ENCODE measurements at regions of chr1 and their contacts with region 1.

Region 1: DNA sequence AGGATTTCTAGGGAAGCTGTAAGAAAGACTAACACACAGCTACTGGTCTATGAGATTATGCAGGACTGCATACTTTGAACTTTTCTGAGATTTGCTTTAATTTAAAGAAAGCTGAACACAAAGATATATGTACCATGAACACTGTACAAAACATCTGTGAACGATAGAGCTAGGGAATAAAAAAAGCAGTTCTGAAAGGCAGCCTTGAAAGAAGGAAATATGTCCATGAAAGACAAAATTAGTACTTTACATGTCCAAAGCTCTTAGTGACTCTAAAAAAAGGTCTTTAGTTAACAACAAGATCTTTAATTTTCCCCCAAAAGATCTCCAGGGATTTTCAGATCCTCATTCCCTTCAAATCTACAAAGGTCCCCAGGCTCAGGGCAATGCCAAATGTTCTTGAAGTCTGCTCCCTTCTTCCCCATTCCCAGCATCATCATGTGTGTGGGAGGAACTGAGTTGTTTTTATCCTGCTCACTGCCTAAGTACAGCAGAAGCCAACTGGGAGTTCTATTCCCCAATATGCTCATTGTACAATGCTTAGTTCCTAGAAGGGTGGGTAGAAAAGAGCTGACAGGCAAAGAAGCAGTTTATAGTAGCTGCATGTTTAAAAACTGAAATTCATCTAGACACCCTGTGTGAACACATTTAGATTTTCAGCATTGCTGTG is 60.1 kb upstream of the PTCH2 start:
- DNase-seq: peak in 4 of 5 donors; percentile 44 to 66 (median 61)
- ATAC-seq: peak; percentile 59 to 92 (median 83)
- H3K4me3 ChIP-seq: peak overlapping the region in 3 of 12 donors; percentile 8 to 27 (median 22)
- H3K27ac ChIP-seq: peak overlapping the region in 7 of 12 donors; percentile 1 to 55 (median 44)
- H3K4me1 ChIP-seq: peaks cover 0 to 19% (median 0%) of the 10 kb centered on the region in 12 donors
- H3K27me3 ChIP-seq: no peaks in the 10 kb centered on the region
- CTCF ChIP-seq: no peak
- POLR2A ChIP-seq: no peak

Region 2: GRCh38 chr1:44848456-44849181 is 54.5 kb before region 1 on chr1:
- intact Hi-C with region 1: loop called in 1 of 10 experiments (anchors 5 kb)
- DNase-seq: peak in 2 of 5 donors; percentile 24 to 40
- ATAC-seq: peak in 2 of 4 donors; percentile 35 to 48
- H3K4me3 ChIP-seq: no peak overlapping the region
- H3K27ac ChIP-seq: peak overlapping the region in 5 of 12 donors; percentile 17 to 61 (median 52)
- H3K4me1 ChIP-seq: peaks cover 0 to 16% (median 11%) of the 10 kb centered on the region in 12 donors
- H3K27me3 ChIP-seq: no peaks in the 10 kb centered on the region
- CTCF ChIP-seq: no peak
- POLR2A ChIP-seq: no peak

Region 3: DNA sequence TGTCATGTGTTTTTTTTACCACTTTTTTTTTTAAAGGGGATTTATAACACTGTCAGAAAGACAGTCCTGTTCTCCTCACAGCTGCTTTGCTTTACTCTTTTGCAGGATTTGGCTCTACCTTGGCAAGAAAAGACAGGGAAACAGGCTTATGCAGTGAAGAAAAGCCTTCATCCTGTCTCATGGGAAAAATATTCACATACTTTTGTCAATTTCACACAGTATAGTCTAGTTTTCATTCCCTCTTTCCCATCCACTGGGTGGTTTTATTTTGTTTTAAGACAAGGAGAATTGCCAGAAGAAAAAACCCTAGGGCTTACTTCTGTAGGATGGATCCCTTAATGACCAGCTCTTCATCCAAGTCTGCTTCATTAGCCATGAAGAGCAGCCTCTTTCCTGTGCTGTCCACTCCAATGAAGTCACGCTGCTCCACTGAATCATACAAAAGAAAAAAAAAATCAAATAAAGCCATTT is 23.2 kb after region 1 on chr1:
- intact Hi-C with region 1: loop called in 1 of 10 experiments (anchors 1 kb)
- DNase-seq: no peak
- ATAC-seq: peak in 2 of 4 donors; percentile 65 to 79
- H3K4me3 ChIP-seq: no peak overlapping the region
- H3K27ac ChIP-seq: peak overlapping the region in 3 of 12 donors; percentile 4 to 43 (median 10)
- H3K4me1 ChIP-seq: peaks cover 0 to 6% (median 0%) of the 10 kb centered on the region in 12 donors
- H3K27me3 ChIP-seq: no peaks in the 10 kb centered on the region
- CTCF ChIP-seq: no peak
- POLR2A ChIP-seq: no peak